Astrocyte of the cerebellum (primary cell): ENCODE measurements at regions of chr9 and their contacts with region 1.

Region 1: GRCh38 chr9:127980706-127981558 is at the start of gene EEIG1:
- DNase-seq: peak; percentile 65
- H3K4me3 ChIP-seq: peak within 1 kb of the TSS; percentile 65
- CTCF ChIP-seq: no peak

Region 2: DNA sequence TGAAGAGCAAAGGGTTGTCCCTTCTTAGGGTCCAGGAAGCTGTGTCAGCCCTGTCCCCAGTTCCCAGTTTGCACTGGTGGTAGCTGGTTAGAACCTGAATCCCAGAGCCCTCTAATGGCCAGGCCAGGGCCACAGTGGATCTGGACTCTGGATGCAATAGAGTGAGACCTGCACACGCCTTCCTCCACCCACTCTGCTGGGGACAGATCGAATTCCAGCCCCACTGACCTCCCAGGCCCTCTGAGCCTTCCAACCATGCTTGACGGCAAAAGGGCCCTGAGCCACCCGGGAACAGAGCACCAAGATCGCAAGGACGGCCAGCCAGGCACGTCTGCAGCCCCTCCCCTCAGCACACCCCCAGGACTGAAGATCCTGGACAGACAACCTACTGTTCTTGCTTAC is 62.5 kb after region 1 on chr9:
- in situ Hi-C with region 1: loop called (anchors 10 kb)
- DNase-seq: no peak
- H3K4me3 ChIP-seq: no peak overlapping the region
- CTCF ChIP-seq: no peak